ENCODE measurements at regions of chr16 and their contacts with region 1.

Region 1: DNA sequence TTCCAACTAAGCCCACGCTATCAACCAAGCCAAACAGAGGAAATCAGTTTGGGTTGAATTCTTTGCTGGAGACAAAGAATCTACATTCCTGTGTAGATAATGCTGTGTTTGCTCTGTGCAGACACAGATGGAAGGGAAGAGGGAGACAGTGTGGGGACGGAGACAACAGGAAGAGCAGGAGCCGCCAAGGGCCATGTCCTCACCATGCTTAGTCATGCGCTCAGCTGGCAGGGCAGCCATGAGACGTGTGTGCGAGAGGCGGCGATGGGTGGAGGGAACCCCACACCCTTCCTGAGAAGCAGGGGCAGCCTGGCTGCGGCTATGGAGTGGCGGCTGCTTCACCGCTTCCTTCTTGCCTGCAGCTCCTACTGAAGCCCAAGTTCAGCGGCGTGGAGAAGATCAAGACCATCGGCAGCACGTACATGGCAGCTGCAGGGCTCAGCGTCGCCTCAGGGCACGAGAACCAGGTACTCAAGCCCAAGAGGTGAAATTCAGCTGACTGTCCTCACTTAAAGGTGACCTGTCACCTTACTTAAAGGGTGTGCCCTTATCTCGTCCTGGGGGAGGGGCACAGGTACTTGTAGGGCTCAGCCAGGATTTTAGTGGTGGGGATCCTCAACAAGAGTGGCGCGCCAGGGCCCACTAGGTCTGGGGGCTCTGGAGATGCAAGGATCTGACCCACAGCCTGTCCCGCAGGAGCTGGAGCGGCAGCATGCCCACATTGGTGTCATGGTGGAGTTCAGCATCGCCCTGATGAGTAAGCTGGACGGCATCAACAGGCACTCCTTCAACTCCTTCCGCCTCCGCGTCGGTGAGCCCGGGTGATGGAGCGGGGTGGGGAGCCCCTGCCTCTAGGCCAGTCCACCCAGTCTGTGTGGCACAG is 47.5 kb downstream of the ADCY7 start:
- DNase-seq: peak; percentile 82 to 85
- H3K4me3 ChIP-seq: no peak overlapping the region
- H3K4me3 Mint-ChIP-seq: peak overlapping the region; percentile 54
- H3K27ac Mint-ChIP-seq: peak overlapping the region; percentile 87
- H3K4me1 ChIP-seq: peaks cover 44% of the 10 kb centered on the region
- H3K4me1 Mint-ChIP-seq: peaks cover 36% of the 10 kb centered on the region
- H3K27me3 ChIP-seq: no peaks in the 10 kb centered on the region
- H3K27me3 Mint-ChIP-seq: no peaks in the 10 kb centered on the region
- CTCF ChIP-seq: no peak

Region 2: DNA sequence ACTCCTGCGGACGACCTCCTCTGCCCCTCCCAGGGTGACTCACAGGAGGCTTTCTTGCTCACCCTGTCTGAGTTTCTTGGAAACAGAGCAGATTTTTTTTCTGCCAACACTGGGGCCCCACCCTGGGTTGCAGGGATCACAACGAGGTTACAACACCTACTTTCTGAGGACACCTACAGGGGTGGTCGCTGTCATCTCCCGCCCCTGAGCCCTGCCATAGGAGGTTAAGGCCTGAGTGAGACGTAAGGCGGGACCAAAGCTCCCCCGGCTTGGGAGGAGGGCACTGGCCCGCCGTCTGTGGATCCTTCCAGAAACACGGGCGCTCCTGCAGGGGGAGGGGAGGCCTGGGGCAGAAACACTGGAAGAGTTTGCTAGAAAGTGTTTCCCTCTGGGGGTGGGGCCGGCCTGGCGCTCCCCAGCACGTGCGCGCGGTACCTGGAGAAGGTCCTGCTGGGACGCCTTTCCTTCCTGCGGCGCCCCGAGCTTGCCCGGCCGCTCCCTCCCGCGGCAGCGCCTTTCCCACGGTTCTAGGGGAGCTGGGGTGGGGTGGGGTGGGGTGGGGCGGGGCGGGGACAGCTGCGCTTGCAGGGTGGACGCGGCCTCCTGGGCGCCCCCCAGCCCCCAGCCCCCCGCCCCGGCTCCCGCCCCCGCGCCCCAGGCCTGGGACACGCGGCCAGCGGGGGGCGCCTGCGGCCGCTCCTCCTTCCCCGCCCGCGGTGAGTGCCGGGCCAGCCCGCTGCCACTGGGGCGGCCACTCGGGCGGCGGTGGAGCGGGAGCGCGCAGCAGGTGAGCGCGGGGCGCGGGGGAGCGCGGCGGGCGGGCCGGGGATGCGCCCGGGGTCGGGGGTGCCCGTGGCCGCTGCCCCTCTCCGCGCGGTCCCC is 68.2 kb before region 1 on chr16:
- CTCF ChIA-PET with region 1: no interaction called
- POLR2A ChIA-PET with region 1: interaction called, 3 read pairs
- intact Hi-C with region 1: loop called (anchors 1 kb)
- DNase-seq: peak; percentile 90
- H3K4me3 ChIP-seq: peak overlapping the region; percentile 47
- H3K4me3 Mint-ChIP-seq: peak overlapping the region; percentile 76
- H3K27ac Mint-ChIP-seq: peak overlapping the region; percentile 89
- H3K4me1 ChIP-seq: peaks cover 14% of the 10 kb centered on the region
- H3K4me1 Mint-ChIP-seq: peaks cover 13% of the 10 kb centered on the region
- H3K27me3 ChIP-seq: no peaks in the 10 kb centered on the region
- H3K27me3 Mint-ChIP-seq: no peaks in the 10 kb centered on the region
- CTCF ChIP-seq: peak in 1 of 2 experiments; percentile 38

Region 3: GRCh38 chr16:50266337-50267091 is 47.3 kb before region 1 on chr16 and contains the start of gene ADCY7:
- CTCF ChIA-PET with region 1: no interaction called
- POLR2A ChIA-PET with region 1: no interaction called
- intact Hi-C with region 1: loop called (anchors 5 kb)
- DNase-seq: no peak
- H3K4me3 ChIP-seq: no peak within 1 kb of the TSS
- H3K4me3 Mint-ChIP-seq: no peak within 1 kb of the TSS
- H3K27ac Mint-ChIP-seq: no peak within 1 kb of the TSS
- H3K4me1 ChIP-seq: peaks cover 8% of the 10 kb centered on the region; the same call in 1 of the 2 replicates
- H3K4me1 Mint-ChIP-seq: peaks cover 11% of the 10 kb centered on the region
- H3K27me3 ChIP-seq: no peaks in the 10 kb centered on the region
- H3K27me3 Mint-ChIP-seq: no peaks in the 10 kb centered on the region
- CTCF ChIP-seq: no peak
- total RNA-seq, gene ADCY7: 51.3 and 54.2 TPM in 2 replicates

Region 4: DNA sequence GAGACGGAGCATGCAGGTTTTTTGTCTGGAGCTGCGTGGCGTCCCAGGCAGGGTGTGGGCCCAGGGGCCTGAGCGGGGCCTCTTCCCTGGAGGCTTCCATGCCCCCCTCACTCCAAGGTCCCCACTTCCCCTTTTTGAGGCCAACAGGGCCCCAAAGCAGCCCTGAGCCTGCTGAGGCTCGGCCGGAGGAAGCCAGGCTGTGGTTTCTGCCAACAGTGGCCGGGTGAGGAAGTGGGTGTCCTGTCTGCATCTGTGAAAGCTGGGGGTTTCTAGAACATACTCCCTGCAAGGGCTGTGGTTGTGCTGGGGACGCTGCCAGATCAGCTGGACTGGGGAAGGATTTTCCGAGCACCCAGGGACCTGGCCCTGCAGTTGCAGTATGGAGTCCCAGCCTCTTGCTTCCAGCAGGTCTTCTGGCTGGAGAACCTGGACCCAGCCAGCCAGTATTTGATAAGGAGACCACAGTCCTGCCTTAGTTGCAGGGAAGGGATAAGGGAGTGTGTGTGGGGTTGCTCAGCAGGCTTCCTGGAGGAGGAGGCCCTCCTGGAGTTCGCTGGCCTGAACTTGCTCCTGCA is 31.8 kb before region 1 on chr16:
- CTCF ChIA-PET with region 1: no interaction called
- POLR2A ChIA-PET with region 1: no interaction called
- intact Hi-C with region 1: no loop called
- DNase-seq: no peak
- H3K4me3 ChIP-seq: no peak overlapping the region
- H3K4me3 Mint-ChIP-seq: no peak overlapping the region
- H3K27ac Mint-ChIP-seq: no peak overlapping the region
- H3K4me1 ChIP-seq: 0 out of 2 replicates have a peak, but pooled peaks cover 2% of the 10 kb centered on the region
- H3K4me1 Mint-ChIP-seq: no peaks in the 10 kb centered on the region
- H3K27me3 ChIP-seq: no peaks in the 10 kb centered on the region
- H3K27me3 Mint-ChIP-seq: no peaks in the 10 kb centered on the region
- CTCF ChIP-seq: no peak

Measured in Caco-2 (cell line).